Motor neuron (in vitro differentiated cells): ENCODE measurements at regions of chr22 and their contacts with region 1.

Region 1: GRCh38 chr22:30116362-30117117 is 36.3 kb downstream of the HORMAD2 start:
- ATAC-seq: peak in 1 of 8 experiments; percentile 36
- H3K4me3 ChIP-seq: no peak overlapping the region
- H3K27ac ChIP-seq: no peak overlapping the region
- H3K4me1 ChIP-seq: no peaks in the 10 kb centered on the region

Region 2: DNA sequence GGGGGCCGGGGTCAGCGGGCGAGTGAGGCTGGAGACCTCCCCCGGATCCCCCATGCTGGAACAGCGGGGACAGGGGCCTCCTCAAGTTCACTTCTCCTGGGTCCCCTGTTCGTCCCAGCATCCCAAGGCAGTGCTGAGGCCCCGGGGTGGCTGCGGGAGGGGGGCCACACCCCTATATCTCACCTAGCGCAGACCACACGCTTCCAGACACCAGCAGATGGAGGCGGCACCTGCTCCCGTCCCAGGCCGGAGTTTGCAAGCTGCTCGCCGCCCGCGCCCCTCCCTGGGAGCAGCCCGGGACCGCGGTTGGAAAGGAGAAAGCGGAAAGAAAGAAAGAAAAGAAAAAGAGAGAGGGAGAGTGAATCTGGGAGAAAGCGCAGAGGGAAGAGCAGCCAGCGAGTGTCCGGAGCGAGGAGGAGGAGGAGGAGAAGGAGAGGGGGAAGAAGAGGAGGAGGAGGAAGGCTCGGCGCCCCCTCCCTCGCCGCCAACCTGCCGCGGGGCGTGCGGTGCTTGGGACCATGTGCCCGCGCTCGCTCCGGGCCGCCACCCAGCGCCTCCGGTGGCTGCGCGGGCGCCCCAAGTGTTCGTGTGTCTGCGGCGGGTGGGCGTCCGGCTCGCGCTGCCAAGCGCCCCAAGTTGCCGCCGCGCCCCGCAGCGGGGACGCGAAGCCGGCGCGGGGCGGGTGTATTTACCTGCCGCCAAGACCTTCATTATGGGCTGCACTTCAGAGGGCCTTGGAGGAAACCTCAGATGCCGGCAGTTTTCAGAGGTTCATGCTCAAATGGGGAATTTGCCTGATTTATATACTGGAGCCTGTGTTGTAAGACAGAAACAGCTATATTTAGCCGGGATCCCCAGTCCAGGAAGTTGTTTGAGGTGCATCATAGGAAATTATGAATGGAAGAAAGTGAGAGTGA is 129.7 kb after region 1 on chr22 and contains the start of gene LIF:
- in situ Hi-C with region 1: loop called in 1 of 9 experiments (anchors 25 kb)
- ATAC-seq: peak; percentile 30 to 77 (median 68)
- H3K4me3 ChIP-seq: peak within 1 kb of the TSS; percentile 29 to 38 (median 32)
- H3K27ac ChIP-seq: no peak within 1 kb of the TSS
- H3K4me1 ChIP-seq: peaks cover 29 to 30% of the 10 kb centered on the region in 2 donors
- total RNA-seq, gene LIF: 0.81 to 14.8 (median 4.3) TPM

Region 3: GRCh38 chr22:30386960-30387827 is 270.7 kb after region 1 on chr22 and contains the start of gene RNF215:
- in situ Hi-C with region 1: loop called in 4 of 9 experiments (anchors 25 kb)
- ATAC-seq: peak; percentile 85 to 94 (median 88)
- H3K4me3 ChIP-seq: peak within 1 kb of the TSS; percentile 57 to 99 (median 85)
- H3K27ac ChIP-seq: peak within 1 kb of the TSS; percentile 80
- H3K4me1 ChIP-seq: peaks cover 3 to 12% of the 10 kb centered on the region in 2 donors
- total RNA-seq, gene RNF215: 9.5 to 22.9 (median 17.3) TPM

Region 4: DNA sequence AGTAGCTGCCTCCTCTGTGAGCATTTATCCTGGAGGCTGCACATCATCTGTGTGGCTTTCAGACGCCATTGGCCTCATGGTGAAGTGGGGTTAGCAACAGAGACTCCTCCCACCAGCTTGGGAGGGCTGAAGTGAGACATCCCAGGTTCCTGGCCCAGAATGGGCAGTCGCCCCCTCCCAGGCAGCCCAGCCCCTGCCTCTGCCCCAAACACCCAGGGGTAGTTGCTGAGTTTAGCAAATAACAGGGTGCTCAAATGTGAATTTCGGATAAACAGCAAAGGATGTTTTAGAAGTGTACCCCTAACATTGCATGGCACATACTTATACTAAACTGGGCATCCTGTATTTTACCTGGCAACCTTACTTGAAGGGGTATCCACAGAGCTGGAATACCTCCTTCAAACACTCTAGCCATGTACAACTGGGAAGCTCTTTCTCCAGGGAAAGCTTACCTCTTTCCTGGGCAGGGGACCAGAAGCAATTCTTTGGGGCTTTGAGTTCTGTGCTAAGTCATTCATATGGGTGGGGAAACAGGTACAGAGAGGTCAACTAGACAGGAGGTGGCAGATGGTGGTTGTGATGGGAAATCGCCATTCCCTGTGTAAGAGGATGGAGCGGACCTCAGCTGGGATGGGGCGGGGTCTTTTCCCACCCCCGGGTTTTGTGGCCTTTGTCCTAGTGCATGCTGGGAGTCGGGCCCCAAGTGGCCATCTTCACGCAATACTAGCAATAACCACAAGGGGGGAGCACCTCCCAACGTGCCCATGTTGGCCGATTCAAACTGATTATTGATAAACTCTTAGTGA is 328.3 kb after region 1 on chr22:
- in situ Hi-C with region 1: no loop called
- ATAC-seq: peak; percentile 42 to 78 (median 66)
- H3K4me3 ChIP-seq: no peak overlapping the region
- H3K27ac ChIP-seq: no peak overlapping the region
- H3K4me1 ChIP-seq: peaks cover 9 to 11% of the 10 kb centered on the region in 2 donors